ENCODE measurements at regions of chr15 and their contacts with region 1.

Region 1: DNA sequence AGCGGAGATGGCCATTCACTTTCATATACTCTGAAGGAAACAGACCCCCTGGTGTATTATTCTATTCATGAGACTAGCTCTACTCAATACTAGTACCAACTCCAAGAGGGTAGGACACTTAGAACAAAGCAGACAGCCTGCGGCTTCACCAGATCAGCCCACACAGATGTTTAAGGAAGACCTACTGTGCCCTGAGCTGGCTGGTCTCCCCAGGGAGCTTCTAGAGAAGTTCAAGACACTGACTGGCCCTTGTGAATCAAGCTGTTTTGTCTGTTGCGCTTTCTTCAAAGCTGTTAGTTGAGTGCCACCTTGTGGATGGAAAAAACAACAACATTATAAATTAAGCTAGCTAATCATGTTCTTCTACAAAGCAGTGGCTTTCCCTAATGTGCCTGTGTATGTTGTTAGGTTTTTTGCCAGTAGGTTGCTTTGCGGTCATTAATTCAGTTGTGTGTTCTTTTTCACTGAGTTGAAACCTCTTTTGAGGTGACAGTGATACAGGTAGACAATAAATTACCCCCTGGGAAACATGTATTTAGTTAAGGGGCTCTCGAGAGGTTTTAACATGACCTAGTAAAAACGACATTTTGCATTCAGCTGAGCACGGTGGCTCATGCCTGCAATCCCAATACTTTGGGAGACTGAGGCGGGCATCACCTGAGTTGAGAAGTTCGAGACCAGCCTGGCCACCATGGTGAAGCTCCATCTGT is 64.2 kb upstream of the MYZAP start:
- DNase-seq: peak; percentile 46
- ATAC-seq: peak; percentile 93
- H3K4me3 ChIP-seq: no peak overlapping the region
- H3K27ac ChIP-seq: no peak overlapping the region
- H3K4me1 ChIP-seq: no peaks in the 10 kb centered on the region
- H3K27me3 ChIP-seq: no peaks in the 10 kb centered on the region; a peak in 1 of 4 replicates
- CTCF ChIP-seq: peak; percentile 34 to 74 (median 38); a peak in 5 of 6 replicates
- EP300 ChIP-seq: no peak
- POLR2A ChIP-seq: no peak
- RAD21 ChIP-seq: peak; percentile 75

Region 2: GRCh38 chr15:56496635-56497034 is 1030.9 kb before region 1 on chr15:
- CTCF ChIA-PET with region 1: interaction called, 9 read pairs
- POLR2A ChIA-PET with region 1: no interaction called
- RAD21 ChIA-PET with region 1: interaction called, 12 read pairs
- SMC1A ChIA-PET with region 1: interaction called, 7 read pairs
- in situ Hi-C with region 1: loop called (anchors 10 kb)
- intact Hi-C with region 1: loop called (anchors 1 kb)
- DNase-seq: peak; percentile 31
- ATAC-seq: peak; percentile 95
- H3K4me3 ChIP-seq: no peak overlapping the region
- H3K27ac ChIP-seq: no peak overlapping the region
- H3K4me1 ChIP-seq: no peaks in the 10 kb centered on the region
- H3K27me3 ChIP-seq: no peaks in the 10 kb centered on the region; a peak in 1 of 4 replicates
- CTCF ChIP-seq: peak; percentile 59 to 66 (median 65); a peak in 5 of 6 replicates
- EP300 ChIP-seq: no peak
- POLR2A ChIP-seq: no peak
- RAD21 ChIP-seq: peak; percentile 81

Region 3: DNA sequence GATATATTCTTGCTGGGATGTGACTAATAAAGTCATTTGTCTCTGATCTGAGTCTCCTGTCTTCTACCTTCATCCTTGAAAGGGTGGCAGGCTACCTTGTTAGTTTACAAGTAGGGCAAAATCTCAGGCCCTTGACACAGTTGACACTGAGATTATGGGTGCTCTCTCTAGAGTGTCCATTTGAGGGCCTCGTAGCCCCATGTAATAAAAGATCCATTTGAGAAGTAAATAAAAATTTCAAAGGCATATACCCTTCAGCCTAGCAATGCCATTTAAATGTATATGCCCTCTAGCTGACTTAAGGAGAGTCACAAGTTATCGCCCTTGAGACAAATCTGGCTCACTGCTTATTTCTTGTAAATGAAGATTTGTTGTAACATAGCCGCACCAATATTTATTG is 510.5 kb before region 1 on chr15:
- CTCF ChIA-PET with region 1: no interaction called
- POLR2A ChIA-PET with region 1: no interaction called
- RAD21 ChIA-PET with region 1: no interaction called
- SMC1A ChIA-PET with region 1: interaction called, 3 read pairs
- in situ Hi-C with region 1: loop called (anchors 25 kb)
- intact Hi-C with region 1: no loop called
- DNase-seq: no peak
- ATAC-seq: peak; percentile 67
- H3K4me3 ChIP-seq: no peak overlapping the region
- H3K27ac ChIP-seq: no peak overlapping the region
- H3K4me1 ChIP-seq: no peaks in the 10 kb centered on the region
- H3K27me3 ChIP-seq: no peaks in the 10 kb centered on the region
- CTCF ChIP-seq: peak in 2 of 3 experiments; percentile 32 to 36; a peak in 2 of 6 replicates
- EP300 ChIP-seq: no peak
- POLR2A ChIP-seq: no peak
- RAD21 ChIP-seq: peak; percentile 65

Region 4: GRCh38 chr15:57505949-57506391 is 21.6 kb before region 1 on chr15:
- CTCF ChIA-PET with region 1: interaction called, 13 read pairs
- POLR2A ChIA-PET with region 1: no interaction called
- RAD21 ChIA-PET with region 1: interaction called, 15 read pairs
- SMC1A ChIA-PET with region 1: interaction called, 5 read pairs
- in situ Hi-C with region 1: no loop called
- intact Hi-C with region 1: no loop called
- DNase-seq: no peak
- ATAC-seq: no peak
- H3K4me3 ChIP-seq: no peak overlapping the region
- H3K27ac ChIP-seq: no peak overlapping the region
- H3K4me1 ChIP-seq: no peaks in the 10 kb centered on the region
- H3K27me3 ChIP-seq: peaks cover 0 to 1% of the 10 kb centered on the region in 2 experiments; a peak in 2 of 4 replicates
- CTCF ChIP-seq: no peak
- EP300 ChIP-seq: no peak
- POLR2A ChIP-seq: no peak
- RAD21 ChIP-seq: no peak

Region 5: GRCh38 chr15:57541805-57542504 is 14.4 kb after region 1 on chr15:
- CTCF ChIA-PET with region 1: interaction called, 101 read pairs
- POLR2A ChIA-PET with region 1: no interaction called
- RAD21 ChIA-PET with region 1: interaction called, 34 read pairs
- SMC1A ChIA-PET with region 1: interaction called, 34 read pairs
- in situ Hi-C with region 1: no loop called
- intact Hi-C with region 1: no loop called
- DNase-seq: no peak
- ATAC-seq: peak; percentile 63
- H3K4me3 ChIP-seq: no peak overlapping the region
- H3K27ac ChIP-seq: no peak overlapping the region
- H3K4me1 ChIP-seq: peaks cover 12% of the 10 kb centered on the region
- H3K27me3 ChIP-seq: peaks cover 0 to 1% of the 10 kb centered on the region in 2 experiments; a peak in 2 of 4 replicates
- CTCF ChIP-seq: peak; percentile 72 to 86 (median 83)
- EP300 ChIP-seq: no peak
- POLR2A ChIP-seq: no peak
- RAD21 ChIP-seq: peak; percentile 39

Region 6: DNA sequence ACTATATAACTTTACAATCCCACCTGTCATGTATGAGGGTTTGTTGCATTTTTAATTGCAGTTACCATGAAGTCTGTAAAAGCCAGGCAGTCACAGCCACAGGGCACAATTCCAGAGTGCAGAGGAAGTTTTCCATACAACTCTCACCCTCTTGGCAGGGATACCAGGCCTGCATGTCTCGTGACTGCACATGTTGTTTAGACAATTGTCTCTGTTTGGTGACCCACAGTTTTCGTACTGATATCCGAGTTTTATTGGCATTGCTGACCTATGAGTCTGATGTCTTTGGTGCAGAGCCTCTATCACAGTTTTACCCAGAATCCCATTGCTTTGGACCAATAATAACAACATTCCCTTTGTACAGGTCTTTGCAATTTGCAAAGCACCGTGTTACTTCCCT is 39.3 kb after region 1 on chr15:
- CTCF ChIA-PET with region 1: no interaction called
- POLR2A ChIA-PET with region 1: no interaction called
- RAD21 ChIA-PET with region 1: no interaction called
- SMC1A ChIA-PET with region 1: no interaction called
- in situ Hi-C with region 1: no loop called
- intact Hi-C with region 1: no loop called
- DNase-seq: no peak
- ATAC-seq: no peak
- H3K4me3 ChIP-seq: no peak overlapping the region
- H3K27ac ChIP-seq: no peak overlapping the region
- H3K4me1 ChIP-seq: no peaks in the 10 kb centered on the region
- H3K27me3 ChIP-seq: no peaks in the 10 kb centered on the region
- CTCF ChIP-seq: no peak
- EP300 ChIP-seq: no peak
- POLR2A ChIP-seq: no peak
- RAD21 ChIP-seq: no peak